Heart right ventricle (tissue), 16 donors: ENCODE measurements at regions of chr1 and their contacts with region 1.

Region 1: DNA sequence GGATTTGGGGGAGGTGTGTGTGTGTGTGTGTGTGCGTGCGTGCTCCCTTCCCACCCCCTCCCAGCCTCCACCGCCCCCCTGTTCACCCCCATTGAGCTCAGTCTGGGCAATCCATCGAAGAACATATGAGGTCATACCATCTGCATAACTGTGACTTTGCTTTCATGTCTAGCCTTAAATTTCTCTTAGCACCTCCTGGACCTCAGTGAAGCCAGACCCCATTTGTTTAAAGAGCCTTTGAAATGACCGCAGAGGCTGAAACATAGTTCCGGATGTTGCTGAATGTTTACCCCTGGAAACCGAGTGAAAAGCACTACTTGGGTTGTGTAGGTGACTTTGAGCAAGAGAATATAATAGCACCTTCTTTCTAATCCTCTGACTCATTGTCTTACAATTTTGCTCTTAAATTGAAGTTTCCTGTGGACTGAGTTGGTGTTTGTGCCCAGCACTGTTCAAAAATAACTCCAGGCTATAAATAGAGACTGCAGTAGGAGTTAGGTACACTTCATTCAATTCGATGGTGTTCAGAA is 75.4 kb downstream of the UBE4B start:
- DNase-seq: no peak
- ATAC-seq: peak in 7 of 8 donors; percentile 35 to 86 (median 74)
- H3K4me3 ChIP-seq: no peak overlapping the region
- H3K27ac ChIP-seq: peak overlapping the region in 9 of 10 donors; percentile 44 to 84 (median 72)
- H3K4me1 ChIP-seq: peaks cover 0 to 36% (median 13%) of the 10 kb centered on the region in 9 donors
- H3K27me3 ChIP-seq: no peaks in the 10 kb centered on the region
- CTCF ChIP-seq: no peak

Region 2: GRCh38 chr1:10032590-10033358 is 75.4 kb before region 1 on chr1 and contains the start of gene UBE4B:
- intact Hi-C with region 1: loop called in 4 of 10 experiments (anchors 5 to 10 kb)
- DNase-seq: peak; percentile 97 to 99
- ATAC-seq: peak; percentile 99 to 100 (median 100)
- H3K4me3 ChIP-seq: peak within 1 kb of the TSS; percentile 87 to 100 (median 98)
- H3K27ac ChIP-seq: peak within 1 kb of the TSS; percentile 85 to 98 (median 95)
- H3K4me1 ChIP-seq: peaks cover 0 to 47% (median 28%) of the 10 kb centered on the region in 9 donors
- H3K27me3 ChIP-seq: no peaks in the 10 kb centered on the region
- CTCF ChIP-seq: peak; percentile 80 to 96 (median 88)
- total RNA-seq, gene UBE4B: 59.0 to 87.3 (median 69.2) TPM

Region 3: DNA sequence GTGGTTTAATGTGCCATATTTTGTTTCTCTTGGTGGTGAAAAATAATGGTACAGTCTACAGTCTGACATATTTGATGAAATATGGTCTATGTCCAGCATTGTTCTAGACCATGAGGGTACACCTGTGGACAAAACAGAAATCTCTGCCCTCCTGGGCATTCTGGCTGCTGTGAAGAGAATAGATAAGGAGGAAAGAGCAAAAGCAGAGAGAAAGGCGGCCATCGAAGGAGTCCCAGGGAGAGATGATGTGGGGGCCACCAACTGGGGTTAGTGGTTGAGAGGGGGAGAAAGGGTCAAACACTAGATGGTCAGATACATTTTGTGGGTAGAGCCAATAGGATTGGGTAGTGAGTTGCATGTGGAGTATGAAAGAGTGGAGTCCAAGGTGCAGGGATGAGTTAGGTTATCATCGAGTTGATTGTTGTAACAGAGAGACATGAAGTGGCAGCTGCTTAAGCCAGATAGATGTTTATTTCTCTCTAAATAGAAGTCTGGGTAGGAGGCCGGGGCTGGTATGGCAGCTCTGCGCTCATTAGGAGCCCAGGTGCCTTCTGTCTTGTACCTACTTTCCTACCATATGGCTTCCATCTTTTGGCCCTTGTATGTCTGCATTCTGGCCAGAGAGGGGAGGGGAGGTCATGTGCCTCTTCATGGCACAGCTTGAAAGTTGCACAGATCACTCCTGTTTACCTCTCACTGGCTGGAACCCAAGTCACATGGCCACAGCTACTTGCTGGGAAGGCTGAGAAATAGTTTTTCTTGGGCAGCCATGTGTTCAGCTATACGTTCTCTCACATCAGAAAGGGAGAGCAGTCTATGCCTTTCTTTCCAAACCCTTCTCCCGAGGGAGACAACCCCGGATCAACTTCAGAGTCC is 62.5 kb before region 1 on chr1:
- intact Hi-C with region 1: loop called in 1 of 10 experiments (anchors 5 kb)
- DNase-seq: no peak
- ATAC-seq: peak in 6 of 8 donors; percentile 16 to 45 (median 38)
- H3K4me3 ChIP-seq: no peak overlapping the region
- H3K27ac ChIP-seq: peak overlapping the region in 7 of 10 donors; percentile 18 to 67 (median 23)
- H3K4me1 ChIP-seq: peaks cover 4 to 54% (median 38%) of the 10 kb centered on the region in 9 donors
- H3K27me3 ChIP-seq: no peaks in the 10 kb centered on the region
- CTCF ChIP-seq: no peak

Region 4: DNA sequence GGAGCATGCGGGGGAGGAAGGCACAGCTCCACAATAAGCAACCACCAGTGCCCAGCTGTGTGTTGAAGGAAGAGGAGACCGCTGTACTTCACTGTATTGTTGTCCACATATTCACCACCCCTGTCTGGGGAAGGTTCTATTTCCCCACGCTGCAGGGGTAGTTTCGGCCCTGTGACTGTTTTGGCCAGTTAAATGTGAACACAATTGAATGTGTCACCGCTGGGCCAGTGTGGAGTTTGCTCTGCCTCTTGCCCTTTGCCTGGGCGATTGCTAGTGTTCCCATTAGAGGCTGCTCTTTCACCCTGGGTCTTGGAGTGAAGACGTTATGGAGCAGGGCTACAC is 42.9 kb before region 1 on chr1:
- intact Hi-C with region 1: loop called in 1 of 10 experiments (anchors 5 kb)
- DNase-seq: peak in 1 of 2 donors; percentile 10
- ATAC-seq: peak; percentile 30 to 73 (median 44)
- H3K4me3 ChIP-seq: no peak overlapping the region
- H3K27ac ChIP-seq: peak overlapping the region; percentile 5 to 95 (median 64)
- H3K4me1 ChIP-seq: peaks cover 20 to 66% (median 49%) of the 10 kb centered on the region in 9 donors
- H3K27me3 ChIP-seq: no peaks in the 10 kb centered on the region
- CTCF ChIP-seq: no peak

Region 5: GRCh38 chr1:10324627-10325026 is 216.4 kb after region 1 on chr1:
- intact Hi-C with region 1: no loop called
- DNase-seq: no peak
- ATAC-seq: no peak
- H3K4me3 ChIP-seq: no peak overlapping the region
- H3K27ac ChIP-seq: no peak overlapping the region
- H3K4me1 ChIP-seq: peaks cover 0 to 3% (median 0%) of the 10 kb centered on the region in 9 donors
- H3K27me3 ChIP-seq: no peaks in the 10 kb centered on the region
- CTCF ChIP-seq: no peak